Left colon (tissue), 2 donors: ENCODE measurements at regions of chr7 and their contacts with region 1.

Region 1: DNA sequence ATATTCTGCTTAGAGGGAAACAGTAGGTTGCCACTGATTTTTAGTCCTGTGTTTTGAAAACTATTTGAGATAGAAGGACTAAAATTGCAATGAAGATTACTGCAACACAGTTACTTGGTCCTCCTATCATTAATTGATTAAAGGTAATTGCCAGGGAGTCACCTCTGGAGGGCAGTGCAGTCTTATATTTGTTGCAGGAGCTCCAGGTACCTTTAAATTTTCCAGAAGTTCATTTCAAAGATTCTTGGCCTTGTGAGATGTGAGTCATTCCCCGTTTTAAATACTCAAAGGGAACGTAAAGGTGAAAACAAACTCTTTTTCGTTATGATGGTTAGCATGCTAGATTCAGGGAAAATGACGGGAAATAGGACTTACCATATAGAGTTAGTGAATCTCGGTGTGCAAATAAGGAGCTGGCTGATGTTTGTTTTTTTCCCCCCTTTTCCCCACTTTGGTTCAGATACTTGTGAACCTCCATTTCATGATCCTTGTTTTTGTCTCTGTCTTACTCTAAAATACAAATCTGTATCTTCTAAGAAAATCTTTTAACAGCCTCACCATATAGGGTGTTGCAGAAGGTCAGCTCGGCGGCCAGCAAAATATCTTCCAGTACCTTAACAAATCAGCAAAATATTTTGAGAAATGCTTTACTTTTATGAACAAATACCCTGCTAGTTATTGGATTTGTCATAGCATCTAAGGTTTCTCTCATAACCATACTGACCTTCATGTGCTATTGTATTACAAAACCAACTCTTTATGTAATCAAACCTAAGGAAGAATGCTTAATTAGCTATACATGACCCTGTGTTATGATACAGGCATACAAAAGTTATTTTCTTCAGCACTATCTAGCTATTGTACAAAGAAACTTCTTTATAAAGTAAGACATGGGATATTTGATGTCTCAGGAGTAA is 143.0 kb upstream of the HDAC9 start:
- DNase-seq: peak in 1 of 2 donors; percentile 40
- ATAC-seq: peak; percentile 76

Region 2: GRCh38 chr7:18151422-18151821 is 201.2 kb before region 1 on chr7:
- intact Hi-C with region 1: no loop called
- DNase-seq: no peak
- ATAC-seq: no peak

Region 3: DNA sequence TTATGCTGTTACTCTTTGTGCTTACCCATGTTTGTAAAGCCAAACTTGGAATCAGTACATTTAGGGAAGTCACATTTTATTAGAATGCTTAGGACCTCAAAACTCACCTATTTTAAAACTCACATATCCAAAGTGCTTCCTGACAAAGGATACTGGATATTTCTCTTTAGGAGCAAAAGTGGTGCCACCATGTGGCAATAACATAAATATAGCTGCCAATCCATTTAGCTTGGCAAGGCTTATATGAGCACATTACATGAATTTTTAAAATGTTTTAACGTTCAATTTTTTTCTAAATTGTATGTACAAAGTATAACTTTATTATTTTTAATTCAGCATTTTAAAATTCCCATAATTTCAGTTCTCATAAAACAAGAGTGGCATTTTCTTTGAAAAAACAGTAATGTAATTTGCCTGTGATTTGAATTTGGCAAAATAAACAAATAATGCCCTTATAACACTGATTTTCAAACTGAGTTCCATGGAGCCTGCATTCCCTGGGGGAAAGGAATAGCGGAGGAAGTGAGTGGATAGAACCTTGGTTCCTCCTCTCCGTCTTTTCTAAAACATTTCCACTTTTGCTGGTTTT is 218.4 kb after region 1 on chr7:
- intact Hi-C with region 1: loop called in 1 of 2 experiments (anchors 10 kb)
- DNase-seq: no peak
- ATAC-seq: peak; percentile 70

Region 4: GRCh38 chr7:18666107-18666728 is 313.6 kb after region 1 on chr7:
- intact Hi-C with region 1: loop called in 1 of 2 experiments (anchors 10 kb)
- DNase-seq: peak; percentile 72 to 84
- ATAC-seq: peak; percentile 86